ENCODE measurements at regions of chr17 and their contacts with region 1.

Region 1: GRCh38 chr17:31448467-31449077 is 57.1 kb downstream of the RAB11FIP4 start:
- DNase-seq: peak; percentile 62
- ATAC-seq: peak; percentile 72
- H3K4me3 ChIP-seq: no peak overlapping the region
- H3K27ac ChIP-seq: no peak overlapping the region
- H3K4me1 ChIP-seq: no peaks in the 10 kb centered on the region; the same call in 1 of the 2 replicates
- H3K27me3 ChIP-seq: peaks cover 2% of the 10 kb centered on the region; the same call in 1 of the 2 replicates
- CTCF ChIP-seq: no peak
- POLR2A ChIP-seq: no peak
- RAD21 ChIP-seq: no peak

Region 2: DNA sequence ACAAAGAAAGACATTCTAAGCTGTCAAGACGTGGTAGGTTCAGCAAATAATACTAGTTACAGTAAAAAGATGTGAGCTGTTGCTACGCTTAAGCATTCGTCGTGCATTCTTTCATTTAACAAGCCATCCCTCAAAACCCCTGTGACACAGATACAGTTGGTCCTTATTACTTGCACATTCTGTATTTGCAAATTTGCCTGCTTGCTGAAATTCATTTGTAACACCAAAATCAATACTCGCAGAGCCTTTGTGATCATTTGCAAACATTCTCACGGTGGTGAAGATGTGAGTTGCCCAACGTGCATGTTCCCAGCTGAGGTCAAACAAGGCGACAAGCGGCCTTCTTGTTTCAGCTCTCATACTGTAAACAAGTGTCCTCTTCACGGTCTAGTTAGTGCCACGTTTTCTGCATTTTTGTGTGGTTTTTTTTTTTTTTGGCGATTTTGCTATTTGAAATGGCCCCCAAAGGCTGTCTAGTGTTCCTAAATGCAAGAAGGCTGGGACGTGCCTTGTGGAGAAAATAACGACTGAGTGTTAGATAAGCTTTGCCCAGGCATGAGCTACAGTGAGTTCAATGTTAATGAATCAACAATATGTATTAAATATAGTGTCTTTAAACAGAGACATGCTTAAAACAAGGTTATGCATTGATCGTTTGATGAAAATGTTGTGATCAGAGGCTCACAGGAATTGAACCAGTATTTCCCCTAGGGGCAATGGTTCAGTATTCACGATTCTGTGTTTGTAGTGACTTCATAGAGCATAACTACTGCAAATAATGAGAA is 27.0 kb after region 1 on chr17:
- CTCF ChIA-PET with region 1: no interaction called
- POLR2A ChIA-PET with region 1: no interaction called
- dilution Hi-C with region 1: no loop called
- in situ Hi-C with region 1: no loop called
- intact Hi-C with region 1: no loop called
- DNase-seq: no peak
- ATAC-seq: no peak
- H3K4me3 ChIP-seq: no peak overlapping the region
- H3K27ac ChIP-seq: no peak overlapping the region
- H3K4me1 ChIP-seq: no peaks in the 10 kb centered on the region
- H3K27me3 ChIP-seq: peaks cover 54% of the 10 kb centered on the region
- CTCF ChIP-seq: no peak
- POLR2A ChIP-seq: no peak
- RAD21 ChIP-seq: no peak

Region 3: GRCh38 chr17:31524926-31525800 is 76.6 kb after region 1 on chr17:
- CTCF ChIA-PET with region 1: no interaction called
- POLR2A ChIA-PET with region 1: no interaction called
- dilution Hi-C with region 1: no loop called
- in situ Hi-C with region 1: loop called (anchors 5 kb)
- intact Hi-C with region 1: no loop called
- DNase-seq: peak; percentile 93
- ATAC-seq: peak; percentile 94
- H3K4me3 ChIP-seq: no peak overlapping the region
- H3K27ac ChIP-seq: no peak overlapping the region
- H3K4me1 ChIP-seq: peaks cover 1% of the 10 kb centered on the region; the same call in 1 of the 2 replicates
- H3K27me3 ChIP-seq: peaks cover 2% of the 10 kb centered on the region; the same call in 1 of the 2 replicates
- CTCF ChIP-seq: peak; percentile 96
- POLR2A ChIP-seq: no peak
- RAD21 ChIP-seq: peak; percentile 97

Region 4: DNA sequence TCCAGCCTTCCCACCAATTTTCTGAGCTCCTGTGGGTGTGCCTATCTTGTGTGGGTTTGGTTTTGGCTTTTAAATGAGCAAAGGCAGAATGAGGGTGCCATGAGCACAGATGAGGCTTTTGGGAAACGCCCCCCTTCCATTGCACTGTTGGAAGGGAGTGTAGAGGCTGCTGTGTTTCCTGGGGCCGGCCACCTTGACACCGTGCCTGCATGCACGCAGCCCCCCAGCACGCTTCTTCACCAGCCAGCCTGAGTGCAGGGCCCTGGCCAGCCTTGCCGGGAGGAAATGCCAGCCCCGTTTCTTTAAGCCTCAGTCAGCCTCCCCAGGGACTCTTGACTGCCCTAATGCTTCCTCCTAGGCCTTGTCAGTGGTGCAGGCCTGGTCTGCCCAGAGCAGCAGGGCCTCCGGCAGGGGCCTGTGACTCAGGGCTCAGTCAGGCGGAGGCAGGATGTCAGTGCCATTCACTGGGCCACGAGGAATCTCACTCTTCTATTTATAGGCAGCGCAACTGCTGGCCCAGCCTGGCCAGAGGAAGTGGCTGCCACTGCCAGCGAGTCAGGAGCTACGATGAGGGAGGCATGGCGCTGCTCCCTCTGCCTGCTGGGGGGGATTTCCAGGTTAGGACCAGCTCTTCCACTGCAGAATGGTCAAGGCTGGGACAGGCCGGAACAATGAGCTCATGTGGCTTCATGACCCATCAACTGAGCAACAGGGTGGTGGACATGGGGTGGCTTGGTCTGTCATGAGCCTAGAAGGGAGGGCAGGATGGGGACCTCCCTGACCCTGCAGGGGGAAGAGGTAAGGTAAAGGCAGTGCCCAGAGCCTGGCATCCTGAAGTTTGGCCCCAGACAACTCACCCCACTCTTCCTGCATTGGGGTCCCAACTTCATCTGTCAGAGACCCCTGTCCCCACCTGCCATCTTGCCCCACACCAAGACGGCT is 148.1 kb after region 1 on chr17:
- CTCF ChIA-PET with region 1: no interaction called
- POLR2A ChIA-PET with region 1: no interaction called
- dilution Hi-C with region 1: no loop called
- in situ Hi-C with region 1: no loop called
- intact Hi-C with region 1: loop called (anchors 5 kb)
- DNase-seq: peak; percentile 98
- ATAC-seq: peak; percentile 94
- H3K4me3 ChIP-seq: no peak overlapping the region
- H3K27ac ChIP-seq: peak overlapping the region; percentile 96
- H3K4me1 ChIP-seq: peaks cover 40% of the 10 kb centered on the region
- H3K27me3 ChIP-seq: no peaks in the 10 kb centered on the region
- CTCF ChIP-seq: peak; percentile 15; the same call in 1 of the 2 replicates
- POLR2A ChIP-seq: peak; percentile 64; the same call in 1 of the 2 replicates
- RAD21 ChIP-seq: peak; percentile 40

Region 5: DNA sequence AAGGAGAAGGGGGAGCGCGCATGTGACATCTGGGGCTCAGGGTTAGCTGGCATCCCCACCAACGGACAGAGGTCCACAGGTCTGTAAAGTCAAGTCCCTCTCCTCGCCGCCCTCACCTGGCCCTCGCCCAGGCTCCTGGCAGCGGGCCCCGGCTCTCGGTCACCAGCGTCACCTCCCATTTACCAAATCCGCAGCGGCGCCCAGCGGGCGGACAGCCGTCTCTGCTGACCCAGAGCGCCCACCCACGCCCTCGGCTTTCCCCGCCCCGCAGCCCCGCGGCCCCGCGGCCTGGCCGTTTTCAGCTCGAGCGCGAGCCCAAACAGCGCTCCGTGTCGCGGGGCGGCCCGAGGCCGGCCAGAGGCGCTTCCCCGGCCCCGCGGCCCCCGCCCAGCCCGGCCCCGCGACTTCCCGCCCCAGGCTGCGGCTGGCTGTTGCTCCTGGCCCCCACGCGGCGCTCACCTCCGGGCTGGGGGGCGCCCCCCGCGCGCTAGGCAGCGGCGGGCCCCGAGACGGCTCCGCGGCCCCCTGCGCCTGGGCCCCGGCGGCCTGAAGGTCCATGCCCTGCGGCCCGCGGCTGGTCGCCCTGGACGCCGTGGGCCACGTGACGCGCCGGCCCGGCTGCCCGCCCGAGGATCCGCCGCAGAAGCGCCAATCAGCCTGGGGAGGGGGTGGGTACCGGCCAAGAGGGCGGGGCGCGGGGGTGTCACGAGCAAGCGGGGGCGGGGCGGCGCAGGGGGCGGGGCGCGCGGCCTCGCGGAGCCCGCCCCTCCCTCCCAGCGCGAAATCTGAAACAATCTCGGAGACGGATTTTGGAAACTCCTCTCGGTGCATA is 410.3 kb after region 1 on chr17 and contains the start of gene COPRS:
- CTCF ChIA-PET with region 1: no interaction called
- POLR2A ChIA-PET with region 1: no interaction called
- dilution Hi-C with region 1: no loop called
- in situ Hi-C with region 1: no loop called
- intact Hi-C with region 1: loop called (anchors 5 kb)
- DNase-seq: peak; percentile 81
- ATAC-seq: peak; percentile 92
- H3K4me3 ChIP-seq: peak within 1 kb of the TSS; percentile 97
- H3K27ac ChIP-seq: peak within 1 kb of the TSS; percentile 67
- H3K4me1 ChIP-seq: peaks cover 4% of the 10 kb centered on the region
- H3K27me3 ChIP-seq: no peaks in the 10 kb centered on the region
- CTCF ChIP-seq: peak; percentile 23; the same call in 1 of the 2 replicates
- POLR2A ChIP-seq: peak; percentile 61; the same call in 1 of the 2 replicates
- RAD21 ChIP-seq: peak; percentile 18; the same call in 1 of the 2 replicates
- total RNA-seq, gene COPRS: 123 and 141 TPM in 2 replicates

Measured in IMR-90 (cell line).